Posterior vena cava (tissue), 2 donors: ENCODE measurements at regions of chr21 and their contacts with region 1.

Region 1: GRCh38 chr21:21324297-21324696 is 326.1 kb downstream of the NCAM2 start:
- DNase-seq: no peak

Region 2: DNA sequence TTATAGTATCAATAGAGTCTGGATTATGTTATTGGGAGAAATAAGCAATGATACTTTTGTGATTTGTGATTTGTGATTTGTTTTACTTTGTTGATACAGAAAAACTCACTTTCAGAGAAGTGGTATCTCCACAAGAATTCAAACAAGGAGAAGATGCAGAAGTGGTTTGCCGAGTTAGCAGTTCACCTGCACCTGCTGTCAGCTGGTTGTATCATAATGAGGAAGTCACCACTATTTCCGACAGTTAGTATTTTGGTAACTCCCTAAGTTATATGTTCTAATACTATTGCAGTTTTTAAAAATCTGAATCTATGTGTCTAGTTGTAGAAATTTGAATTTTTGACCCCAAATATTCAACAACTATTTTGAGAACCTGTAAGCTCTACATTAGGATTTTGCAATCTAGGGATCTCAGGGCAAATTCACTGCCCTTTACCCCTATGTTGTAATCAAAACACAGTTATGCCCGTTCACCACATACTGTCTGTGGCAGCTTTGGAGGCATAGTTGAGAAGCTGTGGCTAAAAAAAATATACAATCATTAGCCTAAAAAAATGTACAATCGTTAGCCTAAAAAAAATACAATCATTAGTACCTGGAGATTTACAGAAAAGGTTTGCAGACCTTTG is 38.0 kb before region 1 on chr21:
- intact Hi-C with region 1: no loop called
- DNase-seq: no peak

Region 3: GRCh38 chr21:21831036-21831435 is 506.7 kb after region 1 on chr21:
- intact Hi-C with region 1: loop called in 1 of 2 experiments (anchors 5 kb)
- DNase-seq: peak; percentile 61

Region 4: DNA sequence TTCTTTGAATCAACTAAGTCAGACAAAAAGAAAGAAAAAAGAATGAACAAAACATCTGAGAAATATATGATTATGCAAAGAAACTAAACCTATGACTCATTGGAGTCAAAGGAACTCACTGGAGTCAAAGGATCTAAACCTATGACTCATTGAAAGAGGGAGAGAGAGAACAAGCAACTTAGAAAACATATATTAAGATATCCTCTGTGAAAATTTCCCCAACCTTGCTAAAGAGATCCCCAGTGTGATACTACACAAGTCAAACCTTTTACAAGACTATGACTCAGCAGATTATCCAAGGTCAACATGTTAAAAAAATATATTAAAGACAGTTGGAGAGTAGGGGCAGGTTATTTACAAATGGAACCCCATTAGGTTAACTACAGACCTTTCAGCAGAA is 1212.2 kb after region 1 on chr21:
- intact Hi-C with region 1: loop called in 1 of 2 experiments (anchors 5 kb)
- DNase-seq: no peak